Pancreas (tissue), 10 donors: ENCODE measurements at regions of chr13 and their contacts with region 1.

Region 1: GRCh38 chr13:48595431-48596429 is 58.0 kb upstream of the CYSLTR2 start:
- DNase-seq: peak in 4 of 6 donors; percentile 47 to 73 (median 68)
- ATAC-seq: peak; percentile 90 to 97 (median 96)
- H3K4me3 ChIP-seq: no peak overlapping the region
- H3K27ac ChIP-seq: peak overlapping the region in 2 of 4 donors; percentile 7 to 50
- H3K4me1 ChIP-seq: peaks cover 5 to 16% (median 5%) of the 10 kb centered on the region in 3 donors
- H3K27me3 ChIP-seq: no peaks in the 10 kb centered on the region
- CTCF ChIP-seq: peak in 3 of 4 donors; percentile 50 to 62 (median 62)

Region 2: GRCh38 chr13:48731957-48732569 is 136.3 kb after region 1 on chr13:
- intact Hi-C with region 1: loop called in 2 of 3 experiments (anchors 5 to 10 kb)
- DNase-seq: peak; percentile 24 to 85 (median 54)
- ATAC-seq: peak; percentile 87 to 99 (median 92)
- H3K4me3 ChIP-seq: peak overlapping the region in 1 of 4 donors; percentile 4
- H3K27ac ChIP-seq: no peak overlapping the region
- H3K4me1 ChIP-seq: no peaks in the 10 kb centered on the region
- H3K27me3 ChIP-seq: no peaks in the 10 kb centered on the region
- CTCF ChIP-seq: peak; percentile 54 to 66 (median 65)

Region 3: DNA sequence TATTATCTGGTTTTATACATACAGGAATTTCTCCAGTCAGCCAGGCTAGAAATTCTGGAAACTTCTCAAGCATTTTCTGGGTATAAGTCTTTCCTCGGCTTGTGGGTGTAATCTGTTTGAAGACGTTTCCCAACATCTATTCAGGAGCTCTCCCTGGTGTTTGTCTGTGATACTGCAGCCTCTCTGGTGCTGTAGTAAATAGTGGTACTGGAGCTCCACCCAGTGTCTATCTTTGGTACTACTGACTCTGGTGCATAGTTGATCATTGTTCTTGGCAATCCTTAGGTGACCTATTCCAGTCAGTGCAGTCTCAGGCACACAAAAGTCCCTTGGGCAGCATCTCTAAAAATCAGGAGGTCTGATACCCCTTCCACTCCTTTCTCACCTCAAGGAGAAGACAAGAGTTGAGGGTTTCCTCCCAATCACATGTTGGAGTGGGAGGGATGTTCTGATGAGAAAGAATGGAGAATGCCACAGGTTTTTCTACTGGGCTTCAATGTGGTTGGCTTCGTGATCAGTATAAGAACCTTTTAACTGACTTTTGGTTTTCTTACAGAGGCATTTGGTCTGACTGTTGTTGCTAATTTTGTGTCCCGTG is 173.5 kb after region 1 on chr13:
- intact Hi-C with region 1: loop called in 1 of 3 experiments (anchors 10 kb)
- DNase-seq: peak in 4 of 6 donors; percentile 70 to 90 (median 79)
- ATAC-seq: peak; percentile 97 to 100 (median 100)
- H3K4me3 ChIP-seq: no peak overlapping the region
- H3K27ac ChIP-seq: no peak overlapping the region
- H3K4me1 ChIP-seq: no peaks in the 10 kb centered on the region
- H3K27me3 ChIP-seq: no peaks in the 10 kb centered on the region
- CTCF ChIP-seq: peak; percentile 90 to 97 (median 92)